CD4-positive, alpha-beta memory T cell (primary cell): ENCODE measurements at regions of chr17 and their contacts with region 1.

Region 1: GRCh38 chr17:32519228-32520103 is 32.7 kb downstream of the CDK5R1 start:
- DNase-seq: peak; percentile 50 to 85 (median 54)
- H3K4me3 ChIP-seq: peak overlapping the region in 1 of 2 donors; percentile 33
- H3K4me3 Mint-ChIP-seq: peak overlapping the region; percentile 78 to 96 (median 88)
- H3K27ac ChIP-seq: peak overlapping the region; percentile 48
- H3K27ac Mint-ChIP-seq: peak overlapping the region; percentile 90 to 98 (median 95)
- H3K4me1 ChIP-seq: peaks cover 73% of the 10 kb centered on the region
- H3K4me1 Mint-ChIP-seq: peaks cover 54 to 82% (median 67%) of the 10 kb centered on the region in 4 donors
- H3K27me3 ChIP-seq: no peaks in the 10 kb centered on the region
- H3K27me3 Mint-ChIP-seq: no peaks in the 10 kb centered on the region

Region 2: GRCh38 chr17:32491371-32492263 is 27.8 kb before region 1 on chr17:
- CTCF ChIA-PET with region 1: interaction called, 28 read pairs
- POLR2A ChIA-PET with region 1: interaction called, 91 read pairs
- intact Hi-C with region 1: loop called (anchors 1 kb)
- DNase-seq: no peak
- H3K4me3 ChIP-seq: no peak overlapping the region
- H3K4me3 Mint-ChIP-seq: peak overlapping the region; percentile 36 to 89 (median 70)
- H3K27ac ChIP-seq: peak overlapping the region; percentile 23
- H3K27ac Mint-ChIP-seq: peak overlapping the region; percentile 65 to 96 (median 88)
- H3K4me1 ChIP-seq: peaks cover 81% of the 10 kb centered on the region
- H3K4me1 Mint-ChIP-seq: peaks cover 27 to 69% (median 56%) of the 10 kb centered on the region in 4 donors
- H3K27me3 ChIP-seq: no peaks in the 10 kb centered on the region
- H3K27me3 Mint-ChIP-seq: no peaks in the 10 kb centered on the region

Region 3: DNA sequence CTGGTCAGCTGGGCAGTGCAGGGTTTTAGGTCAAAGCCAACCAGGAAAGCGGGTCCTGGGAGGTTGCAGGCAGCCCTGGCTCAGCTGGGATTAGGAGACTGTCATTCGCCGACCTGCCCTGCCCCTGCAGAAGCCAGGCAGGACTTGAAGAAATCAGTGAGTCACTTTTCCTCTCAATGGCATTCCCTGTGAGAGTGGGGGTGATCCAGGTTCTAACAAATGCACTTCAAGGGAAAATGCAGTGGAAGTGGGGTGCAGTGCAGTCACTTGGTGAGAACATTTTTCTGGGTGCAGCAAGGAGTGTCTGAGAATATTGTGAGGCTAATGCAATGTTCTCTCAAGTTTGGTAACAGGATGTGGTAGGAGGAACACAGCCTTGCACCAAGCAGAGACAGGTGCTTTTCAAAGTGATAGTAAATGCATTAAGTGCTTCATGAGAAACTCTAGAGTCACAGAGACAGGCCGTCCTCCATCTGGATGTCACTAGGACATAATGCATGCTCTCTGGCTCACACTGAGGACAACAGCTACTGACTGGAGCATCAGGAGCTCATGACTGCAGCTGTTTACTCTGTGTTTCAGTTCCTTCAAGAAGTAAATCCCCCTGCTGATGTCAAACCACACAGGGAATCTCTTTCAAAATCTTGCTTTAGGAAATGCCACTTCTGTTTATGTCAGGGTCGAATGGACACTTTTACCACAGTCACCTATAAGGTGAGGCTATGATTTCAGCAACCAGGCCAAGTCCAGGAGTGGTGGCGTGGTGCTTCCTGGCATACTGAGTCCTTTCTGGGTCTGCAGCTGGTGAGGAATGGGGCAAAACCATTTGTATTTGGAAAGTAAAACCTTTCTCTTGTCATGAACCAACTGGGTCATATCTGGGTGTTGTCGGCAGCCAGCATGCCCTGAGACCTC is 16.0 kb before region 1 on chr17:
- CTCF ChIA-PET with region 1: interaction called, 6 read pairs
- POLR2A ChIA-PET with region 1: interaction called, 40 read pairs
- intact Hi-C with region 1: loop called (anchors 1 kb)
- DNase-seq: peak; percentile 64 to 77 (median 74)
- H3K4me3 ChIP-seq: peak overlapping the region; percentile 4 to 16
- H3K4me3 Mint-ChIP-seq: peak overlapping the region; percentile 66 to 88 (median 79)
- H3K27ac ChIP-seq: peak overlapping the region; percentile 73
- H3K27ac Mint-ChIP-seq: peak overlapping the region; percentile 95 to 99 (median 96)
- H3K4me1 ChIP-seq: peaks cover 70% of the 10 kb centered on the region
- H3K4me1 Mint-ChIP-seq: peaks cover 46 to 69% (median 59%) of the 10 kb centered on the region in 4 donors
- H3K27me3 ChIP-seq: no peaks in the 10 kb centered on the region
- H3K27me3 Mint-ChIP-seq: no peaks in the 10 kb centered on the region

Region 4: DNA sequence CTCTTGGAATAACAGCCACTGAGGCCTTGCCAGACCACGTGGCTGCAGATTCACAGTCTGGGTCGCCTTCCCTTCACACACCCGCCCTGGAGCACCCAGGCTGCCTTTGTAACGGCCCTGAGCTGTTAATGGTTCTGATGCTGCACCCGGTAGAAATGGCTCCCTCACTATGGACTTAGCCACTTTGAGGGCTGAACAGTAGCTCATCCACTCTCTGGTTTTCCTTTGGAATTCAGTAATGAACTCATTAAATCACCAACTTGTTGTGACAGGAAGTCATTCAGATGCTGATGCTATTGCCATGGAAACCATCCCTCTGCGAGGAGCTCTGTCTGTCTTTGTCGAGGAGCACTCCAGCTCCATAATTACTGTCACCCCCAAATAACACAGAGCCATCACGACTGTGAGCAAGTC is 26.6 kb after region 1 on chr17:
- CTCF ChIA-PET with region 1: interaction called, 3 read pairs
- POLR2A ChIA-PET with region 1: no interaction called
- intact Hi-C with region 1: loop called (anchors 2 kb)
- DNase-seq: no peak
- H3K4me3 ChIP-seq: no peak overlapping the region
- H3K4me3 Mint-ChIP-seq: no peak overlapping the region
- H3K27ac ChIP-seq: no peak overlapping the region
- H3K27ac Mint-ChIP-seq: peak overlapping the region in 2 of 7 donors; percentile 7 to 67
- H3K4me1 ChIP-seq: peaks cover 5% of the 10 kb centered on the region
- H3K4me1 Mint-ChIP-seq: peaks cover 1 to 5% (median 2%) of the 10 kb centered on the region in 4 donors
- H3K27me3 ChIP-seq: no peaks in the 10 kb centered on the region
- H3K27me3 Mint-ChIP-seq: no peaks in the 10 kb centered on the region

Region 5: GRCh38 chr17:32609085-32609484 is 89.6 kb after region 1 on chr17:
- CTCF ChIA-PET with region 1: interaction called, 3 read pairs
- POLR2A ChIA-PET with region 1: no interaction called
- intact Hi-C with region 1: loop called (anchors 2 kb)
- DNase-seq: peak; percentile 67 to 74 (median 73)
- H3K4me3 ChIP-seq: no peak overlapping the region
- H3K4me3 Mint-ChIP-seq: no peak overlapping the region
- H3K27ac ChIP-seq: no peak overlapping the region
- H3K27ac Mint-ChIP-seq: peak overlapping the region in 3 of 7 donors; percentile 3 to 56 (median 11)
- H3K4me1 ChIP-seq: no peaks in the 10 kb centered on the region
- H3K4me1 Mint-ChIP-seq: peaks cover 5 to 9% (median 5%) of the 10 kb centered on the region in 4 donors
- H3K27me3 ChIP-seq: no peaks in the 10 kb centered on the region
- H3K27me3 Mint-ChIP-seq: no peaks in the 10 kb centered on the region

Region 6: GRCh38 chr17:32894245-32894644 is 374.8 kb after region 1 on chr17:
- CTCF ChIA-PET with region 1: no interaction called
- POLR2A ChIA-PET with region 1: no interaction called
- intact Hi-C with region 1: no loop called
- DNase-seq: no peak
- H3K4me3 ChIP-seq: no peak overlapping the region
- H3K4me3 Mint-ChIP-seq: no peak overlapping the region
- H3K27ac ChIP-seq: no peak overlapping the region
- H3K27ac Mint-ChIP-seq: no peak overlapping the region
- H3K4me1 ChIP-seq: no peaks in the 10 kb centered on the region
- H3K4me1 Mint-ChIP-seq: no peaks in the 10 kb centered on the region
- H3K27me3 ChIP-seq: no peaks in the 10 kb centered on the region
- H3K27me3 Mint-ChIP-seq: peaks cover 7 to 10% of the 10 kb centered on the region in 2 donors